Activated CD4-positive, alpha-beta T cell treated with anti-CD3 and anti-CD28 coated beads, Interleukin-2, amount 10 ng/mL, durations not matched to agents 24 days and 14 days (primary cell): ENCODE measurements at regions of chr1 and their contacts with region 1.

Region 1: DNA sequence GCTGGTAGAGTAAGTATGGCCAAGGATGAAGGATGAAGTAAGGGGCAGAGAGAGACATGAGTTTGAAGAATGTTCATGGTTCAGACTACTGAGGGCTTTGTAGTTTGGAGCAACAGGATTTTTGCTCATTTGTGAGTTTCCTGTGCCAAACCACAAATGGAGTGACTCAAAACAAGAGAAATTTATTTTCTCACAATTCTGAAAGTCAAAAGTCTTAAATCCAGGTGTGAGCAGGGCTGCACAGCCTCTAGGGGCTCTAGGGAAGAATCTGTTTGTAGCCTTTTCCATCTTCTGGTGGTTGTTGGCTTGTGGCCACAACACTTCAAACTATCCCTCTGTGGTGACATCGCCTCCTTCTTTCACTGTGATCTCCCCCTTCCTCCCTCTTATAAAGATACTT is 58.9 kb downstream of the RHOU start:
- DNase-seq: peak; percentile 87
- H3K4me3 Mint-ChIP-seq: no peak overlapping the region
- H3K27ac Mint-ChIP-seq: no peak overlapping the region
- H3K4me1 Mint-ChIP-seq: peaks cover 28% of the 10 kb centered on the region
- H3K27me3 Mint-ChIP-seq: no peaks in the 10 kb centered on the region

Region 2: DNA sequence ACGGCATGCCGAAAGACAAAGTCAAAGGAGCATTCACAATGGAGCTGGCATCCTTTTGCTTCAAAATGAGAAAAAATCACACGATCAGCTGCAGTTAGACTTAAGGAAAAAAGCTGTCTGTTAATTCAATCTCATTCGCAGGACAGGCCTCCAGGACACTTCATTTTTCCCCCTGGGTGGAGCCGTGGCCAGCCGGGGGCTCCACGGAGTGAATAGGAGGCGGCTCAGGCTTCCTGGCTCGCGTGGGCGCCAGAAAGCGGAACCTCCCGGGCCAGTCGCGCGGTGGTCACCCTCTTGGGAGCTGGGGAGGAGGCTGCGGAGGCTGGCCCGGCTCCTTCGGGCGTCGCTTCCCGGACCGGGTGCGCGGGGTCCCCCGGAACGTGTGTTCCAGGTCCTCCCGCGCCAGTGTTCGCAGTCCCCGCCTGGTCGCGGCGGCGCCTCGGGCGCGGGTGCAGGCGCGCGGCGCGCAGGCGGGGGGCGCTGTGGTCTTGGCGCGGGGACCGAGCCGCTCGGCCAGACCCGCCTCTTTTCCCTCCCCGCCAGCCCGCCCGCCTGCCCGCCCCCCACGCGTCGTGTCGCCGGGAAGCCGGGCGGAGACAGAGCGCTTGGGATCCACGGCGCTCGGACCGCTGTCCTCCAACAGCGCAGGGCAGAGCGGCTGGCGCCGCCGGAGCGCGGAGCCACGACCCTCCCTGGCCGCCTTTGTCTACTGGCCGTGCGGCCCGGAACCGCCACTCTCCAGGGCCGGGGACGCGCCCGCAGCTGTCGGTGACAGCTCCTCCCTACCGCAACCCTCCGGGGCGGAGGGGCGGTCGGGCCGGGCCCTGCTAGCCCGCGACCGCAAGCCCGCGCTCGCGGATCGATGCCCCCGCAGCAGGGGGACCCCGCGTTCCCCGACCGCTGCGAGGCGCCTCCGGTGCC is 59.0 kb before region 1 on chr1 and contains the start of gene RHOU:
- intact Hi-C with region 1: loop called (anchors 1 kb)
- DNase-seq: peak; percentile 93
- H3K4me3 Mint-ChIP-seq: peak within 1 kb of the TSS; percentile 81
- H3K27ac Mint-ChIP-seq: peak within 1 kb of the TSS; percentile 36
- H3K4me1 Mint-ChIP-seq: peaks cover 6% of the 10 kb centered on the region
- H3K27me3 Mint-ChIP-seq: peaks cover 35% of the 10 kb centered on the region
- total RNA-seq, gene RHOU: 0.51 and 0.69 TPM in 2 replicates

Region 3: GRCh38 chr1:228804671-228805413 is 10.7 kb after region 1 on chr1:
- intact Hi-C with region 1: loop called (anchors 1 kb)
- DNase-seq: peak; percentile 87
- H3K4me3 Mint-ChIP-seq: peak overlapping the region; percentile 50
- H3K27ac Mint-ChIP-seq: peak overlapping the region; percentile 83
- H3K4me1 Mint-ChIP-seq: peaks cover 57% of the 10 kb centered on the region
- H3K27me3 Mint-ChIP-seq: no peaks in the 10 kb centered on the region

Region 4: DNA sequence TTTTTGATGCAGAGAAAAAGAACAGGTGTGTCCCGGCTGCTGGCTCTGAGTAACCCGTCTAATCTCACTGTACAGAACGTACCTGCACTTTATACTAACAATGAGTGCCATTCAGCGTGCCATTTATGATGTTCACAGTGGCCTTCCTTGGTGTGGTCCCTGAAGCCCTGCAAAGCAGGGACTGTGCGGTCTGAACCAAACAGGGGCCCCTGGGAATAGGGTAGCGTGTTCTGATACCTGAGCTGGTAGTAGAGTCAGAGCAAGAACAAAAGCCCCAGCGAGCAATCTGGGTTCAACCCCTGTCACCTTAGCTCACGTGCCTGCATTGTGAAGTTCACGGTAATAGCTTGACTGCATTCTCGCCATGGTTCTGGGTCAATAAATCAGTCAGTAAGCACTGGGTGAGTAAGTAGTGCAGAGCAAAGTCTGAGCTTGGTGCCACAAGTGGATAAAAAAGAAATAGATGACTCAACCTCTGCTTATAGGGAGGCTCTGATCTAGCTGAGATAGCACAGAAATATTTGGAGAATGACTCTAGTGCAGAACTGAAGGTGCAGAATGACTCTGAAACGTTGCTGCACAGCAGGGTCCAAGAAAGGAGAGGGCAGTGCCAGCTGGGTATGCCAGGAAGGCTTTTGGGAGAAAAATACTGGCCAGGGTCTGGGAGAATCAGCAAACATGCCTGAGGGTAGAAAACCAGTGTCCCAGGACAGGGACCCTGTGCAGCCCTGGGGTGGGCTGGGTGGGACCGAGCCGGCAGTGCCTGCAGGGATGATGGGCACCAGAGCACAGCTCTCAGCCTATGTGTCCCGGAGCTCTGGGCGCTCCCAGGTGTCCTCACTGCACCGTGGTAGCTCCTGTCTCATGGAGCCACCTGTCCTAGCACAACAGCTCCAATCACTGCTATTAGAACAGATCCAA is 67.0 kb after region 1 on chr1:
- intact Hi-C with region 1: loop called (anchors 1 kb)
- DNase-seq: no peak
- H3K4me3 Mint-ChIP-seq: no peak overlapping the region
- H3K27ac Mint-ChIP-seq: no peak overlapping the region
- H3K4me1 Mint-ChIP-seq: peaks cover 24% of the 10 kb centered on the region
- H3K27me3 Mint-ChIP-seq: peaks cover 15% of the 10 kb centered on the region

Region 5: DNA sequence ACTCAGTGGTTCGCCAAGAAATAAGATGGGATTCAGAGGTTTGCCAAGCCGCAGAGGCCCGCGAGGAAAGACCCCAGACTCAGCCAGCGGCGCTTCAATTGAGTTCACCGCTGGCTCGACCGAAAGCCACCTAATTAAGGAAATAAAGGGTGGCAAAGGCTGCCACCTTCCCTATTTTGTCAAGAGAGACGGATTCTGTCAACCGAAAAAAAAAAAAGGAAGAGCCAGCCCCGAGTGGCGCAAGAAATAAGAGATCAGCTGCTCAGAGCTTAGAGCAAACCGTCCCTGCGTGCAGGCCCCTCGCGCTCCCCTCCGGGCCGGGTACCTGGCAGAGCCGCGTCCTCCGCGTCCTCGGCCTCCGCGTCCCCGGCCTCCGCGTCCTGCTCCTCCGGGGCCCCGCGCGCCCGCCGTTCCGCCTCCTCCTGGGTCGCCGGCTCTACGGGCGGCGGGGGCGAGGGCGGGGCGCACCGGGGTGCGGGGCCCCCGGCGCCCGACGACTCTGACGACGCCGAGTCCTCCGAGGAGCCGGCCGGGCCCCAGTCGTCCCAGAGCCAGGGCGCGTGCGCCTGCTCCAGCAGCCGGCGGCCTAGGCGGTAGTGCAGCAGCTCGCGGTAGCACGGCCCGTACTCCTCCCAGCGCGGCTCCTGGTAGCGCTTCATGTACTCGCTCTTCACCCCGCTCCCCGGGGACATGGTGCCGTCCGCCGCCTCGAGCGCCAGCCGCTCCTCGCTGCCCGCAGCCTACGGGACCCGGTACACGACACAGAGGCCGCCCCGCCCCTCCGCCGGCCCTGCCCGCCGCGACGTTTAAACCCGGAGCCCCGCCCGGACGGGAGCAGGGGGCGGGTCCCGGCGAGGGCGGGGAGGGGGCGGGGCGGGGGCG is 547.8 kb after region 1 on chr1:
- intact Hi-C with region 1: loop called (anchors 10 kb)
- DNase-seq: peak; percentile 96
- H3K4me3 Mint-ChIP-seq: peak overlapping the region; percentile 91
- H3K27ac Mint-ChIP-seq: peak overlapping the region; percentile 94
- H3K4me1 Mint-ChIP-seq: peaks cover 48% of the 10 kb centered on the region
- H3K27me3 Mint-ChIP-seq: peaks cover 20% of the 10 kb centered on the region